ENCODE measurements at regions of chr3 and their contacts with region 1.

Region 1: GRCh38 chr3:115040673-115041286 is 106.3 kb downstream of the ZBTB20 start:
- DNase-seq: peak; percentile 74
- H3K4me3 Mint-ChIP-seq: no peak overlapping the region
- H3K27ac Mint-ChIP-seq: no peak overlapping the region
- H3K4me1 Mint-ChIP-seq: no peaks in the 10 kb centered on the region
- H3K27me3 Mint-ChIP-seq: no peaks in the 10 kb centered on the region

Region 2: GRCh38 chr3:115814778-115815380 is 774.1 kb after region 1 on chr3:
- intact Hi-C with region 1: loop called (anchors 2 kb)
- DNase-seq: peak; percentile 90
- H3K4me3 Mint-ChIP-seq: no peak overlapping the region
- H3K27ac Mint-ChIP-seq: no peak overlapping the region
- H3K4me1 Mint-ChIP-seq: no peaks in the 10 kb centered on the region
- H3K27me3 Mint-ChIP-seq: peaks cover 13% of the 10 kb centered on the region

Measured in activated CD4-positive, alpha-beta T cell treated with anti-CD3 and anti-CD28 coated beads, Interleukin-2, amount 10 ng/mL, durations not matched to agents 24 days and 14 days (primary cell).